HAP-1 (cell line): ENCODE measurements at regions of chr1 and their contacts with region 1.

Region 1: DNA sequence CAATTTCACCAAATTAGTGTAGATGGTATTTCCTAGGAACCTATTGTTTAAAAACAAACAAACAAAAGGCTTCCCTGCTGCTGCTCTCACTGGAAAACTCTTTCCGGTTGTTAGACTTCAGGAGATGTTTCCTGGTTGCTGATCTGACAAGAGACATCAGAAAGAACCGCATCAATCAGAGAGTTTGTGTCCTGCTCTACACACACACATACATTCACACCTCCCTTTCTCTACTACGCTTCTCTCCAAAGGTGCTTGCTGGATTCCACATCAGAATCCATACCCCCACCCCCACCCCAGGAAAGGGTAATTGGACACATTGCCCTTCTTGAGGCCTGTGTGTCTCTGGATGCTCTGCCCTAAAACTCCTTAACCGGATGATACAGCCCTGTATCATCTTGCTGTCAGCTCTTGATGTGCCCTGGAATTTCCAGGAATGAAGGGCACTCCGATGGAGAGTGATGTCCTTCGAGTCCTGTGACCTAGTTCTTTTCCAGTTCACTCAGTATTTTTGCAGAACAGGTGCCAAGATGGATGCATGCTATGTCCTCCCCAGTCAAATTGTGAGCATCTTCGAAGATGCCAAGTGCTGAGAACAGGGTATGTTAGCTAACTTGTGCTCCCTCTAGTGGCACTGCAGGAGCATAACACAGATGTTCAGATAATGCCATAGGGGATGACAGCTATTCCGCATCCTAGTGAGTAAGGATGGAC is 113.7 kb upstream of the SLC35F3 start:
- DNase-seq: peak; percentile 38 to 60
- H3K4me3 ChIP-seq: no peak overlapping the region
- H3K4me1 ChIP-seq: no peaks in the 10 kb centered on the region
- H3K27me3 ChIP-seq: no peaks in the 10 kb centered on the region

Region 2: DNA sequence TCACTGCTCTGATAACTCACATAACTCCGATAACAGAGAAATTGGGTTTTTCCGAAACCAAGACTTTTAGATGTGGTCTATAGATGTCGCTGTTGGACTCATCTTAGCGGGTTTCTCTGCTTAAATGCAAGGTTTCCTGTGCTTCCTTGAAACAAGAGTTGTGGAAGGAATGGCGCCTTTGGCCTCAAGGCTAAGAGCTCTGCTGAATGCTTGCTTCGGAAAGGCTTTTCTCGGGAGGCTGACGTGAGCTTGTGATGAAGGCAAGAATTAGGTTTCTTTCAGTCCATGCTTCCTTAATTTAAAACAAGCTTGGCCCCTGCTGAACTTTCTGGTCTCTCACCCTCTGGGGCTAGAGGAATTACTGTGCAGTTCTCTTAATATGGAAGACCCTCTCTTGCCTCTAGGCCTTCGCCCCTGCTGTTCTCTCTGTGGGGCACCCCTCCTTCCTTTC is 349.8 kb before region 1 on chr1:
- in situ Hi-C with region 1: loop called (anchors 25 kb)
- DNase-seq: peak; percentile 49 to 64
- H3K4me3 ChIP-seq: no peak overlapping the region
- H3K4me1 ChIP-seq: no peaks in the 10 kb centered on the region
- H3K27me3 ChIP-seq: no peaks in the 10 kb centered on the region